ENCODE measurements at regions of chr1 and their contacts with region 1.

Region 1: DNA sequence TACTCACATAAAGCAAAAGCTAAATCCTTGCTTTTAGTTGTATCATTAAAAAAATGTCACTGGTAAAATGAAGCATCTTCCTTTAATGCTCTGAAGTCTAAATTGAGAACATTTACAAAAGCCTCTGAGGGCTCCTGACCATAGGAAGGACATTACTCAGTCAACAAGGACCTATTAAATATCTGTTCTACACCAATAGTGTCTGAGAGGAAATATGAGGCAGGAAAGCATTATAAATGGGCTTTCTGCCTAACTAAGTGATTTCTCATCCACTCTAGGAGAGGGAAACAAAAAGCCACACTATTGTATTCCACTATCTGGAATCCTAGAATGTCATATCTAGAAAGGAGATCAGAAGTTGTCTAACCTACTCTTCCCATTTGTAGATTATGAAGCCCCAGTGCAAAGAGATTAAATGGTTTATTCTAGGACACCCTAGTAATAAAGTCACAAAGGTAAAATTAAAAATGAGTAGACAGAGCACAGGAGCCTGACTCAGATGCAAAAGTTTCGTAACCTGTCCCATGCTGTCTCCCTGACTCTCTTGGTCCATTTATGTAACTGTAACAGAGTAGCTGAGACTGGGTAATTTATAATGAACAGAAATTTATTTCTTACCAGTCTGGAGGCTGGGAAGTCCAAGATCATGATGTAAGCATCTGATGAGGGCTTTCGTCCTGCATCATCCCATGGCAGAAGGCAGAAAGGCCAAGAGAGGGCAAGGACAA is 17.6 kb downstream of the RGS1 start:
- DNase-seq: no peak
- ATAC-seq: no peak
- H3K4me3 ChIP-seq: no peak overlapping the region
- H3K27ac ChIP-seq: no peak overlapping the region
- H3K4me1 ChIP-seq: no peaks in the 10 kb centered on the region
- H3K27me3 ChIP-seq: no peaks in the 10 kb centered on the region

Region 2: DNA sequence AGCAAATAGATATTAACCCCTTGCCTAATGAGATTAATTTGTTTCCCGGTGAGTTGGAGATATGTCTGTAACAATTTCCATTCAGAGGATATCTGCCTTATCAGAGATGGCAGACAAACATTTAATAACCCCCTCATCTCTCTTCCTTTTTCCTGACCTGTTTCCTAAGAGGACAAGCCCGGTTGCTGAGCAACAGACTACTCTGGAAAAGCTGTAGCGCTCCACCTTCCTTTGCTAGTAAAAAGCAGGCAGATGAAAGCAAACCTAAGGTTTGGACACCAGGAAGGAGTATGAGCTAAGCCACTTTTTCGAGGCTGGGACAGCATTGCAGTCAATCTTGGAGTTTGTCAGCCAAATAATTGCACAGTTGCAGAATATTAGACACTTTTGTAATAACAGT is 194.0 kb before region 1 on chr1:
- intact Hi-C with region 1: no loop called
- DNase-seq: no peak
- ATAC-seq: no peak
- H3K4me3 ChIP-seq: no peak overlapping the region
- H3K27ac ChIP-seq: no peak overlapping the region
- H3K4me1 ChIP-seq: no peaks in the 10 kb centered on the region
- H3K27me3 ChIP-seq: no peaks in the 10 kb centered on the region

Region 3: GRCh38 chr1:192489748-192490147 is 103.4 kb before region 1 on chr1:
- intact Hi-C with region 1: loop called in 1 of 4 experiments (anchors 10 kb)
- DNase-seq: peak; percentile 56 to 66 (median 62)
- ATAC-seq: peak; percentile 88 to 92
- H3K4me3 ChIP-seq: no peak overlapping the region
- H3K27ac ChIP-seq: no peak overlapping the region
- H3K4me1 ChIP-seq: no peaks in the 10 kb centered on the region
- H3K27me3 ChIP-seq: no peaks in the 10 kb centered on the region

Measured in right cardiac atrium (tissue), 5 donors.